GM12878 (cell line): ENCODE measurements at regions of chrX and their contacts with region 1.

Region 1: DNA sequence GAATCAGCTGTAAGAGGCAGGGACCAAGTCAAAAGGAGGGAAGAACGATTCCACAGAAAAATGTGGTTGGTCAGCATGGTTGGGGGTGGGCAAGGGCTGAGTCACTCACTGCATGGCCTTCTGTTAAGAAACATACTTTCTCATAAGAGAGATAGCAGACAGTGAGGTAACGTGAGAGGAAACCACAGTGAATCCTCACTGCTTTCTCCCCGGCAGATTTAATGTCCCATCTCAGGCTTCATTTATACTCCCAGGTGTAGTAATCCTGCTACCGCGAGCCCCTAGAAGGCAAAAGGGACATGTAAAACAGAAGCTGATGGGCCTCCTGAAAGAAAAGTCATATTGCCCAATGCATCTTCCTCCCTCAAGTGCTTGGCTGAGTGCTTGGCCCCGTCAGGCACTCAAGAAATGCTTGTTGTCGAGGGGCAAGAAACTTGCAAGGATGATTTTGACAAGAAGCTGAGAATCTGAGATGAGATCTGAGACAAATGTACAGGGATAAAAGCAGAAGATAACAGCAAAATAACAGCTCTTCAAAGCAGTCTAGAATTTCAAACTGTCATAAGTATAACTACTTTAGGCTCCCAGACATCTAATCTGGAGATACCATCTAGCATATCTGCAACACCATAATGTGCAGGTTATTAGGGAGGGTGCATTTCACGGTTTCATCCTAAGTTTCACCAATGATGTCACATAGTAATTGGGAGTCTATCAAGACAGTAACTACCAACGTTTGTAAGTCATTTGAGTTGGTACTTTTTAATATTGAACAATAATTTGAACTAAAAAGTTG is 40.2 kb downstream of the SH3KBP1 start:
- DNase-seq: no peak
- ATAC-seq: peak; percentile 55
- H3K4me3 ChIP-seq: 0 out of 2 replicates have a peak overlapping the region, but pooled peaks have one; percentile 8
- H3K27ac ChIP-seq: peak overlapping the region; percentile 79
- H3K4me1 ChIP-seq: peaks cover 38% of the 10 kb centered on the region
- H3K27me3 ChIP-seq: no peaks in the 10 kb centered on the region
- CTCF ChIP-seq: no peak
- EP300 ChIP-seq: no peak
- POLR2A ChIP-seq: no peak
- RAD21 ChIP-seq: no peak

Region 2: DNA sequence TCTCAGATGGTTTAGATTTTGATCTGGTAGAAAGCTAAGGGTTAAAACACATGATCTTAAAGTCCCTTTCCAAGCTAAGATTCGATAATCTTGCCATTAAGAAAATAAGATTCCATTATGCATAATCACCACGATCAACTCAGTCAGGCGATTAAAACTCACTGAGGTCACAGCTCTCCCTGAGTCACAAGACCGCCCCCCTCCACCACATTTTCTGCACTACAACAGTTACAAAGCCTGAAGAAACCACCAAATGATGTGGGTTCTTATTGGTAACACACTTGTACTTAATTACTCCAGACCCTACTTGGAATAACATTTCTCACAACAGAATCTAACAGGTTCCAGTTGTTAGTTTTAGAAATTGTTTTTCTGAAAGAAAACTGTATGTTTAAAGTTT is 22.6 kb before region 1 on chrX:
- CTCF ChIA-PET with region 1: no interaction called
- POLR2A ChIA-PET with region 1: no interaction called
- RAD21 ChIA-PET with region 1: interaction called, 3 read pairs
- SMC1A ChIA-PET with region 1: interaction called, 11 read pairs
- in situ Hi-C with region 1: no loop called
- intact Hi-C with region 1: no loop called
- DNase-seq: no peak
- ATAC-seq: peak; percentile 57
- H3K4me3 ChIP-seq: no peak overlapping the region
- H3K27ac ChIP-seq: no peak overlapping the region
- H3K4me1 ChIP-seq: no peaks in the 10 kb centered on the region
- H3K27me3 ChIP-seq: no peaks in the 10 kb centered on the region; a peak in 1 of 4 replicates
- CTCF ChIP-seq: no peak
- EP300 ChIP-seq: no peak
- POLR2A ChIP-seq: no peak
- RAD21 ChIP-seq: no peak